ENCODE measurements at regions of chr3 and their contacts with region 1.

Region 1: GRCh38 chr3:97510795-97511194 is 253.8 kb upstream of the ARL6 start:
- DNase-seq: no peak
- H3K4me3 ChIP-seq: no peak overlapping the region
- H3K27ac ChIP-seq: no peak overlapping the region
- H3K4me1 ChIP-seq: no peaks in the 10 kb centered on the region
- H3K27me3 ChIP-seq: no peaks in the 10 kb centered on the region
- CTCF ChIP-seq: no peak

Region 2: GRCh38 chr3:97464035-97464434 is 46.8 kb before region 1 on chr3:
- CTCF ChIA-PET with region 1: no interaction called
- dilution Hi-C with region 1: loop called (anchors 5 kb)
- in situ Hi-C with region 1: no loop called
- intact Hi-C with region 1: no loop called
- DNase-seq: no peak
- H3K4me3 ChIP-seq: no peak overlapping the region
- H3K27ac ChIP-seq: no peak overlapping the region
- H3K4me1 ChIP-seq: no peaks in the 10 kb centered on the region
- H3K27me3 ChIP-seq: no peaks in the 10 kb centered on the region
- CTCF ChIP-seq: no peak

Measured in mammary epithelial cell (primary cell).